Ovary (tissue), 10 donors: ENCODE measurements at regions of chr11 and their contacts with region 1.

Region 1: GRCh38 chr11:64531906-64532312 is 59.1 kb upstream of the SLC22A12 start:
- DNase-seq: no peak
- H3K4me3 ChIP-seq: no peak overlapping the region
- H3K27ac ChIP-seq: no peak overlapping the region
- H3K4me1 ChIP-seq: no peaks in the 10 kb centered on the region
- H3K27me3 ChIP-seq: no peaks in the 10 kb centered on the region
- CTCF ChIP-seq: no peak
- EP300 ChIP-seq: no peak
- POLR2A ChIP-seq: no peak

Region 2: GRCh38 chr11:64477675-64478074 is 54.2 kb before region 1 on chr11:
- intact Hi-C with region 1: loop called in 1 of 4 experiments (anchors 2 kb)
- DNase-seq: no peak
- H3K4me3 ChIP-seq: no peak overlapping the region
- H3K27ac ChIP-seq: no peak overlapping the region
- H3K4me1 ChIP-seq: no peaks in the 10 kb centered on the region
- H3K27me3 ChIP-seq: no peaks in the 10 kb centered on the region
- CTCF ChIP-seq: no peak
- EP300 ChIP-seq: no peak
- POLR2A ChIP-seq: no peak